Ascending aorta (tissue), 2 donors: ENCODE measurements at regions of chr17 and their contacts with region 1.

Region 1: GRCh38 chr17:72118335-72119076 is 2.3 kb upstream of the SOX9 start:
- DNase-seq: no peak
- H3K4me3 ChIP-seq: peak overlapping the region; percentile 42 to 45
- H3K27ac ChIP-seq: no peak overlapping the region
- H3K4me1 ChIP-seq: peaks cover 2 to 24% of the 10 kb centered on the region in 2 donors
- H3K27me3 ChIP-seq: peaks cover 15% of the 10 kb centered on the region
- CTCF ChIP-seq: peak; percentile 51 to 87 (median 81)

Region 2: DNA sequence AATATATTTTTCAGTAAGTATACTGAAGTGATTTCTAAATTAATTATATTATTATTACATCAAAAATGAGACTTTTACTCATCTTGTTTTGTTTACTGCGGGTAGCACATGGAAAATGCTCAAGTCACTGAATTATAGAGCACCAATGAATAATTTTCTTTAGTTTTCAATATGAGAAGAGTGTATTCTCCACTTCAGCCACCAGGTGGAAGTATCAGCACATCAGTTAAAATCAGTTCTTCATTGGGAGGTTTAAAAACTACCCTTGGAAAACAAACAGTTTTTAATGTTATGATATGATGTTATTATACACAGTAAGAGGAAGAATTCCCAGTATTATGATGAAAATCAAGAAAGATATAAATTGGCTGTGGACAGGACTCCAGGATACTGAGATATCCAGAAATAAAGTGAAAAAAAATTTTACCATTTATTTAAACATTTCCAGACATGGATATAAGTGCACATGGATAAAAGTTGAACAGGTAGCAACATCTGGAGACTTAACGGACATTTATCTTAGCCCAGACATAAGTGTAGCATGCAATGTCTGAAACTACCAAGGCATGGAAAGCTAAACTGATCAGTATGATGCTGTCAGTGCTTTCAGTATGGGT is 1481.9 kb before region 1 on chr17:
- intact Hi-C with region 1: loop called (anchors 2 kb)
- DNase-seq: no peak
- H3K4me3 ChIP-seq: no peak overlapping the region
- H3K27ac ChIP-seq: no peak overlapping the region
- H3K4me1 ChIP-seq: no peaks in the 10 kb centered on the region
- H3K27me3 ChIP-seq: no peaks in the 10 kb centered on the region
- CTCF ChIP-seq: peak in 2 of 3 experiments; percentile 48 to 63

Region 3: DNA sequence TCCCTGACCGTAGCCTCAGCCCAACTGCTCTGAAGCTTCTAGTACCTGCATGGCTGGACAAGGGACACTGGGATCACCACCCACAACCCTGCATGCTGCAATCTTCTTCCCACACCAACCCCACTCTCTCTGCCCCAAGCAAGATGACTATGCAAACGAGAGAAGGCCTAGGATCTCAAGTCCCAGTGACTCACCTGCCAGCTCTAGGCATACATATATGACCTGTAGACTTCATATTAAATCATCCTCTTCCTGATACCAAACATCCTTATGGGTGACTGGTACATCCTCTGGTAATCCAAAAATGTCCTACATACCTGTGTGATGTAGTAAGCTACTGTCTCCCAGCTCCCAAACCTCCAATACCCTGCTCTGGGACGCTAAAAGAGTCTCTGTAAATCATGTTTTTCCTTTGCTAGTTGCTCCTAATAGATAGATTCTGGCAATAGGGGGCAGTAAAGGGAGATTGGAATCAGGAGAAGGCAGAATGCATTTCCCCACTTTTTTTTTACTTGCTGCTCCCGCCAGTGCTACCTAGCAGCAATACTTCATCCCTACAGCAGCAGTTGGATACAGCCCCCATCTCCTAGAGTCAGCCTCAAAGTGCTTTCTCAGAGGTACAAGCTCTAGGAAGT is 41.1 kb before region 1 on chr17:
- intact Hi-C with region 1: no loop called
- DNase-seq: no peak
- H3K4me3 ChIP-seq: no peak overlapping the region
- H3K27ac ChIP-seq: no peak overlapping the region
- H3K4me1 ChIP-seq: no peaks in the 10 kb centered on the region
- H3K27me3 ChIP-seq: no peaks in the 10 kb centered on the region
- CTCF ChIP-seq: no peak

Region 4: GRCh38 chr17:72134595-72134994 is 16.1 kb after region 1 on chr17:
- intact Hi-C with region 1: no loop called
- DNase-seq: no peak
- H3K4me3 ChIP-seq: no peak overlapping the region
- H3K27ac ChIP-seq: no peak overlapping the region
- H3K4me1 ChIP-seq: no peaks in the 10 kb centered on the region
- H3K27me3 ChIP-seq: no peaks in the 10 kb centered on the region
- CTCF ChIP-seq: no peak

Region 5: DNA sequence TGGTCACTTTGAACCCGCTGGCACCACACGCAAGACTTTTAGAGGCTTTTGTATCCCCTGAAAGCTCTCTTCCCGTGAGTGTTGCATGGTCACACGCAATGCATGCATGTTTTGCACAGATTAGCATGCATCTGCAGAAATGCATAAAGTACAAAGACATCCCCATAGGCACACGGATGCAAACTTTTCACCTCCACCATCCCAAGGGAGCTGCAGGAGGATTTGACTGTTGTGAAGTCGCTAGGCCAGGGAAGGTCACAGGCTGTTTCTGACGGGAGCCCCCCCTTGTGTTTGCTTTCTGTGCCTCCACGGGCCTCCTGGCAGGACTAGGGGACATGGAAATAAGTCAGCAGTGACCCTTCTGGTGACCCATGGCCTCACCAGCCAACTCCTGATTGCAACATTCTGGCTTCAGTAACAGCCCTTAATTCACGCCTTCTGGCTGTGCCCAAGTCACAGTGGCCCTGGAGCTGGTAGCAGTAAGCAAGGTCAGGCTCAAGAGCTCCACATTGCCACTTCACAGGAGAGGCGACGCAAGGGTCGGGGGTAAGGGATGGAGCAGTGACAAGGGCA is 47.4 kb after region 1 on chr17:
- intact Hi-C with region 1: no loop called
- DNase-seq: no peak
- H3K4me3 ChIP-seq: no peak overlapping the region
- H3K27ac ChIP-seq: no peak overlapping the region
- H3K4me1 ChIP-seq: no peaks in the 10 kb centered on the region
- H3K27me3 ChIP-seq: no peaks in the 10 kb centered on the region
- CTCF ChIP-seq: no peak

Region 6: GRCh38 chr17:72539981-72540897 is 421.7 kb after region 1 on chr17:
- intact Hi-C with region 1: loop called (anchors 2 kb)
- DNase-seq: peak in 1 of 2 donors; percentile 71
- H3K4me3 ChIP-seq: peak overlapping the region in 1 of 2 donors; percentile 30
- H3K27ac ChIP-seq: no peak overlapping the region
- H3K4me1 ChIP-seq: peaks cover 0 to 4% of the 10 kb centered on the region in 2 donors
- H3K27me3 ChIP-seq: no peaks in the 10 kb centered on the region
- CTCF ChIP-seq: peak; percentile 66 to 95 (median 82)